ENCODE measurements at regions of chr6 and their contacts with region 1.

Region 1: GRCh38 chr6:152863618-152864326 is 113.2 kb downstream of the VIP start:
- DNase-seq: peak; percentile 21 to 52 (median 41)
- H3K4me3 ChIP-seq: no peak overlapping the region
- H3K4me3 Mint-ChIP-seq: no peak overlapping the region
- H3K27ac ChIP-seq: no peak overlapping the region
- H3K27ac Mint-ChIP-seq: no peak overlapping the region
- H3K4me1 ChIP-seq: no peaks in the 10 kb centered on the region
- H3K4me1 Mint-ChIP-seq: no peaks in the 10 kb centered on the region
- H3K27me3 ChIP-seq: no peaks in the 10 kb centered on the region
- H3K27me3 Mint-ChIP-seq: peaks cover 0 to 12% (median 3%) of the 10 kb centered on the region in 3 donors
- CTCF ChIP-seq: peak; percentile 84

Region 2: GRCh38 chr6:152552616-152553209 is 311.1 kb before region 1 on chr6:
- intact Hi-C with region 1: no loop called
- DNase-seq: peak; percentile 47 to 65 (median 61)
- H3K4me3 ChIP-seq: no peak overlapping the region
- H3K4me3 Mint-ChIP-seq: no peak overlapping the region
- H3K27ac ChIP-seq: no peak overlapping the region
- H3K27ac Mint-ChIP-seq: no peak overlapping the region
- H3K4me1 ChIP-seq: peaks cover 11% of the 10 kb centered on the region in 2 donors
- H3K4me1 Mint-ChIP-seq: peaks cover 10% of the 10 kb centered on the region
- H3K27me3 ChIP-seq: no peaks in the 10 kb centered on the region
- H3K27me3 Mint-ChIP-seq: peaks cover 0 to 1% (median 0%) of the 10 kb centered on the region in 3 donors
- CTCF ChIP-seq: peak; percentile 92

Region 3: DNA sequence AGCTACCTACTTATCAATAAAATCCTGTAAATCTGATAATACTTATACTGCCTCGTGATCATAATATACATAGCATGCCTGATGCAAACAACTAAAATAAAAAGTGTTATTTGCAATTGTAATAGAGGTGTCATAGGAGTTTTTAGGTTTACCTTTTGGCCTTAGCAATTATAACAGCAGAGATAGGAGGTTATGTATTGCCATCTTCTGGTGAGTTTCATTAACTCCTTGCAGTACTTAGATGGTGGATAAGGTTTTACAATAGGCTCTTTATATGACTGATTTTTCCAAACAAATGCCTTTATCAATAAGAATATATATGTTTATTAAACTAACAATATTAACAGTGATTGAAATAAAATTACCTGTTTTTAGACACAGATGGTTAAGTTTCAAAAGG is 193.9 kb before region 1 on chr6:
- intact Hi-C with region 1: no loop called
- DNase-seq: peak in 1 of 3 donors; percentile 6
- H3K4me3 ChIP-seq: no peak overlapping the region
- H3K4me3 Mint-ChIP-seq: no peak overlapping the region
- H3K27ac ChIP-seq: no peak overlapping the region
- H3K27ac Mint-ChIP-seq: no peak overlapping the region
- H3K4me1 ChIP-seq: no peaks in the 10 kb centered on the region
- H3K4me1 Mint-ChIP-seq: peaks cover 2% of the 10 kb centered on the region
- H3K27me3 ChIP-seq: no peaks in the 10 kb centered on the region
- H3K27me3 Mint-ChIP-seq: peaks cover 0 to 2% (median 2%) of the 10 kb centered on the region in 3 donors
- CTCF ChIP-seq: peak; percentile 22

Region 4: DNA sequence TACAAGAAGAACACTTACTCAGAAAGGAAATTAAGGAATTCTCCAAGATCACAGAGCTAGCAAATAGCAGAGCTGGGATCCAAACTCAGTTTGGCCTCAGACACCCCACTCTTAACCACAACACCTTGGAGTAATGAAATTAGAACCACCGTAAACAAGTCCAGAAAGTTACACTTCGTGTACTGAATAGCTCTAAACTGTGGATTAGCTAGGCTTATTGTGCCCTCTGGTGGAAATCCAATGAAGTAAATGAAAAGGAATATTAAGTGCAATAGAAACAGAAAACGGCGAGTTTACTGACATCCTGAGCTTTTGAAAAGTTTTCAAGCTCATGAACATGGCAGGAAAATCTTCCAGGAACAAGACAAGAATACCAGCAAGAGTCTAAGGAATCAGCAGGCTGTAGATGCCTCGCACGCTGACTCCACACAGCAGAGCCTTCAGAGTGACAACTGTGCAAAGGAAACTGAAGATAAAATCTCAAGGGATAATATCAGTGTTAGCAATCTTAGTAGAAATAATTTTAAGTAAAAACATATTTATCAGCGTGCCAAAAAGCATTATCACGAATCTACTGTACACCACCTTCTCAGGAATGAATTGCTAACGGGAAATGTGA is 84.5 kb after region 1 on chr6:
- intact Hi-C with region 1: loop called in 1 of 2 experiments (anchors 10 kb)
- DNase-seq: peak; percentile 3 to 34 (median 15)
- H3K4me3 ChIP-seq: no peak overlapping the region
- H3K4me3 Mint-ChIP-seq: peak overlapping the region; percentile 54 to 83
- H3K27ac ChIP-seq: no peak overlapping the region
- H3K27ac Mint-ChIP-seq: no peak overlapping the region
- H3K4me1 ChIP-seq: no peaks in the 10 kb centered on the region
- H3K4me1 Mint-ChIP-seq: peaks cover 6% of the 10 kb centered on the region
- H3K27me3 ChIP-seq: no peaks in the 10 kb centered on the region
- H3K27me3 Mint-ChIP-seq: peaks cover 2 to 3% (median 3%) of the 10 kb centered on the region in 3 donors
- CTCF ChIP-seq: peak; percentile 74

Region 5: GRCh38 chr6:153023977-153024708 is 160.4 kb after region 1 on chr6:
- intact Hi-C with region 1: loop called (anchors 5 kb)
- DNase-seq: peak; percentile 29 to 68 (median 61)
- H3K4me3 ChIP-seq: no peak overlapping the region
- H3K4me3 Mint-ChIP-seq: no peak overlapping the region
- H3K27ac ChIP-seq: no peak overlapping the region
- H3K27ac Mint-ChIP-seq: no peak overlapping the region
- H3K4me1 ChIP-seq: no peaks in the 10 kb centered on the region
- H3K4me1 Mint-ChIP-seq: no peaks in the 10 kb centered on the region
- H3K27me3 ChIP-seq: no peaks in the 10 kb centered on the region
- H3K27me3 Mint-ChIP-seq: peaks cover 0 to 3% (median 2%) of the 10 kb centered on the region in 3 donors
- CTCF ChIP-seq: peak; percentile 82